Transverse colon (tissue), 4 donors: ENCODE measurements at regions of chr3 and their contacts with region 1.

Region 1: GRCh38 chr3:128794770-128795649 is 69.0 kb downstream of the RAB7A start:
- DNase-seq: peak; percentile 61
- H3K4me3 ChIP-seq: no peak overlapping the region
- H3K27ac ChIP-seq: peak overlapping the region; percentile 13 to 31 (median 20)
- H3K4me1 ChIP-seq: peaks cover 3 to 32% (median 13%) of the 10 kb centered on the region in 4 donors
- H3K27me3 ChIP-seq: no peaks in the 10 kb centered on the region
- CTCF ChIP-seq: peak; percentile 77 to 87 (median 84)
- EP300 ChIP-seq: no peak
- POLR2A ChIP-seq: no peak

Region 2: GRCh38 chr3:128617557-128618397 is 177.2 kb before region 1 on chr3:
- in situ Hi-C with region 1: no loop called
- intact Hi-C with region 1: loop called (anchors 10 kb)
- DNase-seq: peak; percentile 99
- H3K4me3 ChIP-seq: peak overlapping the region; percentile 67 to 79 (median 70)
- H3K27ac ChIP-seq: peak overlapping the region; percentile 83 to 91 (median 89)
- H3K4me1 ChIP-seq: peaks cover 10 to 18% (median 14%) of the 10 kb centered on the region in 4 donors
- H3K27me3 ChIP-seq: no peaks in the 10 kb centered on the region
- CTCF ChIP-seq: peak; percentile 88 to 99 (median 95)
- EP300 ChIP-seq: no peak
- POLR2A ChIP-seq: peak; percentile 58

Region 3: DNA sequence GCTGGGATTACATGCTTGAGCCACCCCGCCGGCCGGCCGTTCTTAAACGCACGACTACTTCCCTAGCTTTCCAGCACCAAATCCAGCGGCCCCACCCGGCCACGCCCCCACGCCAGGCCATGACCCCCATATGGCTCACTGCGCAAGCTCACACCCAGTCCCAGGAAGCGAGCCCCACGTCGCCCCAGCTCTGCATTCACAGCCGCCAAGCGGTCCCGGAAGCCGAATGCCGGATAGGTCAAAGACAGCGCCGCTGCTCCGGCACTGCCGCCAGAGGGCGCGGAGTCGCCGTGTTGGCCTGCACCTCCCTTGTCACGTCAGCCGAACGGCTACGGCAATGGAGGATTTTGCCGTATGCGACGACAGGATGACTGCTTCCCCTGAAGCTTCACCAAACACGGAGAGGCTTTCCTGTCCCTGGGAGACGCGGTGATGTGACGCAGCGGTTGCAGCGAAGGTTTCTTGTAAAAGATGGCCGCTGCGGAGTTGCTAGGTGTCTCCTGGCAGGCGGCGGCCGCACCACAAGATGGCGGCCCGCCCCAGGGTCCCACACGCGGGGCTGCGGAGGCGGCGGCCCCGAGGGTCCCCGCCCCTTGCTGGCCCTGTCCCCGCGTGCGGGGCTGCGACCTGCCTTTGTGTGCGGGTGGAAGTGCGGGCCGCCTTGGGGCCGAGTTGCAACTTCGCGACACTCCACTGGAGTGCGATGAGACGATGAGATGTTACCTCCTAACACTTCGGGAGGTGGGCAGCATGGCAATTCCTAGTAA is 114.2 kb before region 1 on chr3:
- in situ Hi-C with region 1: loop called in 3 of 4 experiments (anchors 10 to 25 kb)
- intact Hi-C with region 1: loop called (anchors 5 kb)
- DNase-seq: peak; percentile 99
- H3K4me3 ChIP-seq: peak overlapping the region; percentile 60 to 77 (median 66)
- H3K27ac ChIP-seq: peak overlapping the region; percentile 92 to 96 (median 94)
- H3K4me1 ChIP-seq: peaks cover 0 to 11% (median 9%) of the 10 kb centered on the region in 4 donors
- H3K27me3 ChIP-seq: no peaks in the 10 kb centered on the region
- CTCF ChIP-seq: peak; percentile 94 to 100 (median 96)
- EP300 ChIP-seq: no peak
- POLR2A ChIP-seq: peak; percentile 93